ENCODE measurements at regions of chr3 and their contacts with region 1.

Region 1: DNA sequence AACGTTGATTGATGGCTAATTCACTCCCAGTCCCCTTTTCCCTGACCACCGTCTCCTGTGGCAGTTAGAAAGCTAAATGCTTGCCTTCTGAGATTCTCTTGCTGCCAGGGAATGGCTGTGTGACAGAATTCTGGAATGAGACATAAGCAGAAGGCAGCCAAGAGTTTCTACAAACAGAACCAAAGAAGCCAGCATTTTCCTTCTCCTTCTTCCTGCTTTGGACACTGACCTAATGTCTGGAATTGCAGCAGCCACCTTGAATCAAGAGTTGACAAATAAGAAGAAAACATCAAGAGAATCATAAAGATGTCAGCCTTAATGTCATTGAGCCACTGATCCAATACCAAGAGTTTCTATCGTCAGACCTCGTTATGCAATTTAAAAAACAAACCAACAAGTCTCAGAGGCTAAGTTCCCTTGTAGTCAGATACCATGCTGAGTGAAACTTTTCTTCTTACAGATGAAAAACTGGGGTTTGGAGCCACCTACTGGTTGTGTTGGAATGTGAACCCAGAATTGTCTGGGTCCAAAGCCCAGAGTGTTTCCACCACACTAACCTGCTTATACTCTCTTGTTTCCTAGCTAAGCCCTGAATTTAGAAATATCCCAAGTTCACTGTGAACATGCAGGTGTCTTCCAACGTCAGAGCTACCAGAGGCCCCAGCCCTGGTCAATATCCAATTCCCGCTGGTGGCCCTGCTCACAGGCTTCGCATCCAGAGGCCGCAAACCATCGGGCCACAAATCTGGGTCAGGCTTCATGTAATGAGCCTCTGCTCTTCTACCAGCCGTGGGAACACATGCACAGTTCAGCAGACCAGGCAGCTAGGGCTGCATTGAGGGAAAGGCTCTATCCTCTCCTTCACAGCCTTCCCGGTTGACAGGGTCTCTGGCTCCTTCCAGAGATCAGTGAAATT is 42.5 kb downstream of the MCF2L2 start:
- DNase-seq: peak; percentile 44 to 58
- H3K4me3 ChIP-seq: no peak overlapping the region
- H3K27ac ChIP-seq: no peak overlapping the region
- H3K4me1 ChIP-seq: no peaks in the 10 kb centered on the region
- H3K27me3 ChIP-seq: no peaks in the 10 kb centered on the region
- CTCF ChIP-seq: peak; percentile 63 to 82 (median 68)
- POLR2A ChIP-seq: no peak

Region 2: GRCh38 chr3:183122257-183122932 is 263.6 kb before region 1 on chr3:
- intact Hi-C with region 1: loop called (anchors 10 kb)
- DNase-seq: no peak
- H3K4me3 ChIP-seq: no peak overlapping the region
- H3K27ac ChIP-seq: no peak overlapping the region
- H3K4me1 ChIP-seq: no peaks in the 10 kb centered on the region
- H3K27me3 ChIP-seq: peaks cover 0 to 2% of the 10 kb centered on the region in 2 donors
- CTCF ChIP-seq: peak; percentile 70 to 84 (median 76)
- POLR2A ChIP-seq: no peak

Region 3: GRCh38 chr3:183180105-183180783 is 205.7 kb before region 1 on chr3:
- intact Hi-C with region 1: loop called (anchors 5 kb)
- DNase-seq: no peak
- H3K4me3 ChIP-seq: peak overlapping the region in 1 of 2 donors; percentile 44
- H3K27ac ChIP-seq: no peak overlapping the region
- H3K4me1 ChIP-seq: peaks cover 0 to 6% of the 10 kb centered on the region in 2 donors
- H3K27me3 ChIP-seq: no peaks in the 10 kb centered on the region
- CTCF ChIP-seq: no peak
- POLR2A ChIP-seq: no peak

Measured in uterus (tissue), 4 donors.